ENCODE measurements at regions of chr4 and their contacts with region 1.

Region 1: GRCh38 chr4:153344131-153345010 is at the start of gene MND1:
- DNase-seq: peak; percentile 89 to 94
- H3K4me3 ChIP-seq: peak within 1 kb of the TSS; percentile 88
- H3K4me3 Mint-ChIP-seq: peak within 1 kb of the TSS; percentile 81
- H3K27ac Mint-ChIP-seq: peak within 1 kb of the TSS; percentile 82
- H3K4me1 ChIP-seq: peaks cover 17% of the 10 kb centered on the region
- H3K4me1 Mint-ChIP-seq: peaks cover 20% of the 10 kb centered on the region
- H3K27me3 ChIP-seq: no peaks in the 10 kb centered on the region
- H3K27me3 Mint-ChIP-seq: no peaks in the 10 kb centered on the region
- CTCF ChIP-seq: peak; percentile 62 to 95
- total RNA-seq, gene MND1: 19.8 and 21.8 TPM in 2 replicates

Region 2: DNA sequence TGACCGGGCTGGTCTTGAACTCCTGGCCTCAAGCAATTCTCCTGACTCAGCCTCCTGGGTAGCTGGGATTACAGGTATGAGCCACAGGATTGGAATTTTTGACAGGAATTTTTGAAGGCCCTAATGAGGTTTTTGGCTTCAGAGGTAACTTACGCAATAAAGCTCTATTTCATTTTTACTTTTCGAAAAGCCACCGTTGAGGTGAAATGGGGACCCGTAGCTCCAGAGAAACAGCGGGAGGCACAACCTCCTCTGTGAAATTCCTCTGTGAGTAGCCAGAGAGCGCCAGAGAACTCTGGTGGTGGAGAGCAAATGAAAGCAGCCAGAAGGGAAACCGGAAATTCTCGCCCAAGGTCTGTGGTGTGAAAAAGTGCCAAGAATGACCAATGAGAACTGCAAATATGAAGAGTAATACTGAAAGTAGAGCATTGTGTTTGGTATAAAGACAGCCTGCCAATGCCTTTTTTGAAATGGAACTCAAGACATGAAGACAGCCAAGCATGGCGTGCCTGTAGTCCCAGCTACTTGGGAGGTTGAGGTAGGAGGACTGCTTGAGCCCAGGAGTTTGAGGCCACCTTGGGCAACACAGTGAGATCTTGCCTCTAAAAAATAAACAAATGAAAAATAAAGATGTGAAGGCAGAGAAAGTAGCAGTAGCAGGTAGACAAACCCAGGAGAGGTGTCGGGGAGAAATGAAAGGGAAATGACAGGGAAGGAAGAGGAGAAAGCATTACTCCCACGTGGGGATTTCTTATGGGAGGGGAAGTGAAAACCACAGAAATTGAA is 88.8 kb after region 1 on chr4:
- CTCF ChIA-PET with region 1: no interaction called
- POLR2A ChIA-PET with region 1: no interaction called
- intact Hi-C with region 1: loop called (anchors 2 kb)
- DNase-seq: peak; percentile 69 to 73
- H3K4me3 ChIP-seq: no peak overlapping the region
- H3K4me3 Mint-ChIP-seq: no peak overlapping the region
- H3K27ac Mint-ChIP-seq: peak overlapping the region; percentile 6
- H3K4me1 ChIP-seq: no peaks in the 10 kb centered on the region; the same call in 1 of the 2 replicates
- H3K4me1 Mint-ChIP-seq: peaks cover 7% of the 10 kb centered on the region
- H3K27me3 ChIP-seq: no peaks in the 10 kb centered on the region
- H3K27me3 Mint-ChIP-seq: no peaks in the 10 kb centered on the region
- CTCF ChIP-seq: peak; percentile 37 to 67

Region 3: GRCh38 chr4:153509724-153510123 is 165.4 kb after region 1 on chr4:
- CTCF ChIA-PET with region 1: no interaction called
- POLR2A ChIA-PET with region 1: no interaction called
- intact Hi-C with region 1: loop called (anchors 1 kb)
- DNase-seq: peak in 1 of 2 experiments; percentile 52
- H3K4me3 ChIP-seq: no peak overlapping the region
- H3K4me3 Mint-ChIP-seq: peak overlapping the region; percentile 40
- H3K27ac Mint-ChIP-seq: peak overlapping the region; percentile 56
- H3K4me1 ChIP-seq: peaks cover 84% of the 10 kb centered on the region
- H3K4me1 Mint-ChIP-seq: peaks cover 37% of the 10 kb centered on the region
- H3K27me3 ChIP-seq: no peaks in the 10 kb centered on the region
- H3K27me3 Mint-ChIP-seq: no peaks in the 10 kb centered on the region
- CTCF ChIP-seq: no peak

Measured in Caco-2 (cell line).